A549 (cell line): ENCODE measurements at regions of chr16 and their contacts with region 1.

Region 1: DNA sequence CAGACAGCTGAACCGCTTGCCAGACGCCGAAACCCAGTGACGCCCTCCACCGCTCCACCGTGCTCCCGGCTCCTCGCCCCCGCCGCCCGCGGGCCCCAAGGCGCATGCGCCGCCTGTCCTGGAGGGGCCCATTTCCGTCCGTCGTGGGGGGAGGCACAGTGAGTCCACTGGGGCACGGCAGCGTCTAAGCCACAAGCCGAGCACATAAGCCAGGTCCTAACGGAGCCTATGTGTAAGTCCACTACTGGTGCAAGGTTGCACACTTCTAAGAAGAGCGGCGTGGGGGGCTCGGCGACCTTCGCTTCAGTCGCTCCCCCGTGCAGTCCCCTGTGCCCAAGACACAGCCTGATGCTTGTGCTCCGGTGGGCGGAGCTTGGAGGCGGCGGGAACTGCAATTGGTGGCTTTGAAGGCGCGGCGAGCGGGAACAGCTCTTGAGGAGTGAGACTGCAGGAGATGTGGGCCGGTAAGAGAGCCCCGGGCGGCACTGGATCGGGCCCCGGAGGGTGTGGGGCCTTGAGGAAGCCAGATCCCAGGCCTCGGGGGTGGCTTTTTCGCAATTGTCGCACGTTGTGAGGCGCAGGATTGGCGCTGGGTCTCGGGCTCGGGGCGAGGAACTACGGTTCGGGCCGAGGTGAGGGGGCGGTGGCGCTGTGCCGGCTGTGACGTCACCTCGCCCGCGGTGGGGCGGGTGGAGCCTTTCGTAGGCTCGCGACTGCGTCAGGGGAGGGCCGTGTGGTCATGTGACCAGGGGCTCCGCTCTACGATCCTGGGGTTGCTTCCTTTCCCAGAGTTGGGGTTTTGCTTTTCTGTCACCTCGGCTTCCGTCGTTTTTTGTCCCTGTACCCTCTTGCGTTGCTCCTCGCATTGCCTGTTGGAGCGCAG is at the starts of genes CENPN and CMC2:
- DNase-seq: peak; percentile 93 to 99
- ATAC-seq: peak; percentile 91 to 95
- H3K4me3 ChIP-seq: peak within 1 kb of the TSS; percentile 96
- H3K27ac ChIP-seq: peak within 1 kb of the TSS; percentile 94 to 95
- H3K4me1 ChIP-seq: peaks cover 19% of the 10 kb centered on the region
- CTCF ChIP-seq: no peak
- EP300 ChIP-seq: no peak
- POLR2A ChIP-seq: peak; percentile 63
- RAD21 ChIP-seq: no peak
- polyA plus RNA-seq, gene CENPN: 89.5 and 101 TPM in 2 replicates
- polyA plus RNA-seq, gene CMC2: 185 and 207 TPM in 2 replicates

Region 2: GRCh38 chr16:80554033-80554432 is 453.0 kb before region 1 on chr16:
- CTCF ChIA-PET with region 1: no interaction called
- POLR2A ChIA-PET with region 1: no interaction called
- DNase-seq: no peak
- ATAC-seq: no peak
- H3K4me3 ChIP-seq: no peak overlapping the region
- H3K27ac ChIP-seq: no peak overlapping the region
- H3K4me1 ChIP-seq: no peaks in the 10 kb centered on the region
- CTCF ChIP-seq: no peak
- EP300 ChIP-seq: no peak
- POLR2A ChIP-seq: no peak
- RAD21 ChIP-seq: no peak

Region 3: GRCh38 chr16:80986557-80986956 is 20.5 kb before region 1 on chr16:
- CTCF ChIA-PET with region 1: interaction called, 18 read pairs
- POLR2A ChIA-PET with region 1: no interaction called
- DNase-seq: no peak
- ATAC-seq: no peak
- H3K4me3 ChIP-seq: no peak overlapping the region
- H3K27ac ChIP-seq: peak overlapping the region in 1 of 2 experiments; percentile 16; a peak in 1 of 6 replicates
- H3K4me1 ChIP-seq: peaks cover 47% of the 10 kb centered on the region
- CTCF ChIP-seq: no peak
- EP300 ChIP-seq: no peak
- POLR2A ChIP-seq: no peak
- RAD21 ChIP-seq: no peak

Region 4: DNA sequence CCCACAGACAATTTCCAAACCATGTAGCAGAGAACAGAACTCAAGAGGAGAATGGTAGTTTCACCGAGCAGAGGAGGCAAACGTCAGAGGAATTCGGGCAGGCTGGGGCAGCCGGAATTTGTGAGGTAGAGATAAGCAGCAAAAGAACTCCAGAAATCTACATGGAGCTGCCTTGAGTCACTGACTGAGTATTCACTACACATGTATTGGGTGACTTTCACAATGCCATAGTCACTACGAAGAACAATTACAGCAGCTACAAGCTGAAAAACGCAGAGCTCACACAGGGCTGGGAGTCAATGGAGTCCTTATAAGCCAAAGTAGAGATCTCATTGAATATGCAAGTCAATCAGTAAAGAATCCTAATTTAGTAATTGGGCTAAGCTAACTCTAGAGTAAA is 13.7 kb before region 1 on chr16:
- CTCF ChIA-PET with region 1: interaction called, 19 read pairs
- POLR2A ChIA-PET with region 1: interaction called, 8 read pairs
- DNase-seq: peak in 1 of 2 experiments; percentile 70
- ATAC-seq: peak; percentile 89 to 92
- H3K4me3 ChIP-seq: peak overlapping the region; percentile 21; the same call in 1 of the 3 replicates
- H3K27ac ChIP-seq: peak overlapping the region; percentile 60 to 78
- H3K4me1 ChIP-seq: peaks cover 77% of the 10 kb centered on the region
- CTCF ChIP-seq: no peak
- EP300 ChIP-seq: no peak
- POLR2A ChIP-seq: no peak
- RAD21 ChIP-seq: no peak

Region 5: DNA sequence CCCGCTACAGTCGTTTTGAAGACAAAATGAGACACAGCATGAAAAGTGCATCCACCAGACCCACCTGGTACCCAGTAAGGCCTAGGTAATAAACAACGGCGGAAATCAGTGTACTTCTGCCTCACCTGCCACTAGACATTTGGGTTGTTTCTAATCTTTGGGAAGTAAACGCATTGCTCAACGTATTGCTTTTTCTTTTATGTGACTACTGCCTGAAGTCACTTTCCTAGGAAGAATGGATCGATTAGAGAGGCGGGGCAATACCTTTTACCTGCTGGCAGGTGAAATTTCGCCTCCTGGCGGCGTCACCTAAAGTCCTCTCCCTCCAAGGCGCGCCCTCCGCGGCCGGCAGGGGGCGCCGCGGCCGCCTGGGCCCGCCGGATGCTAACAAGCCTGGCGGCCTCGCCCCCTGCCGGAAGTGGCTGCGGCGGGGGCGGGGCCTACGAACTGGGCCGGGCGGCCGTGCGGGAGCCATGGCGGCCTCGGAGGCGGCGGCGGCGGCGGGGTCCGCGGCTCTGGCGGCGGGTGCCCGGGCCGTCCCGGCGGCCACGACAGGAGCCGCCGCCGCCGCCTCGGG is 28.4 kb after region 1 on chr16 and contains the start of gene ATMIN:
- CTCF ChIA-PET with region 1: interaction called, 33 read pairs
- POLR2A ChIA-PET with region 1: interaction called, 3 read pairs
- DNase-seq: peak; percentile 83 to 85
- ATAC-seq: peak; percentile 96
- H3K4me3 ChIP-seq: peak within 1 kb of the TSS; percentile 94
- H3K27ac ChIP-seq: peak within 1 kb of the TSS; percentile 86 to 96
- H3K4me1 ChIP-seq: peaks cover 9% of the 10 kb centered on the region; the same call in 1 of the 3 replicates
- CTCF ChIP-seq: peak; percentile 100
- EP300 ChIP-seq: no peak
- POLR2A ChIP-seq: peak; percentile 62
- RAD21 ChIP-seq: peak; percentile 52 to 82
- polyA plus RNA-seq, gene ATMIN: 50.4 and 56.4 TPM in 2 replicates

Region 6: DNA sequence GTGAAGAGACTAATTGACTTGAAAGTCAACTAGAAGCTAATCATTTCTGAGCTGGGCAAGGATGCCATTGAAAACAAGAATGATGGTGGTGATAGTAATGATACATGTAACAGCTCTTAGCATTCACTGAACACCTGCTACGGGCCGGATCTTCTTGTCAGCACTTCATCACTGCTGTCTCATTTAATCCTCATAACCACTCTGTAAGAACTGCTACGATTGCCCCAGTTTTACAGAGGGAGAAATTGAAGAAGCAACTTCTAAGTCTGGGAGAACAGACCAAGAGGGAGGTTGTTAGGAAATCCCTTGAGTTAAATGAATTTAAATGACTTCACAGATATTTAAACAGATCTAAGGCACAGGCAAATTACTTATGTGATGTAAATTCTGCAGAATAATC is 300.7 kb after region 1 on chr16:
- CTCF ChIA-PET with region 1: no interaction called
- POLR2A ChIA-PET with region 1: no interaction called
- DNase-seq: no peak
- ATAC-seq: no peak
- H3K4me3 ChIP-seq: no peak overlapping the region
- H3K27ac ChIP-seq: no peak overlapping the region
- H3K4me1 ChIP-seq: peaks cover 12% of the 10 kb centered on the region
- CTCF ChIP-seq: no peak
- EP300 ChIP-seq: no peak
- POLR2A ChIP-seq: no peak
- RAD21 ChIP-seq: no peak

Region 7: GRCh38 chr16:81737885-81738786 is 731.1 kb after region 1 on chr16:
- CTCF ChIA-PET with region 1: interaction called, 15 read pairs
- POLR2A ChIA-PET with region 1: no interaction called
- DNase-seq: peak; percentile 86 to 87
- ATAC-seq: peak; percentile 93 to 94
- H3K4me3 ChIP-seq: peak overlapping the region; percentile 32; the same call in 2 of the 3 replicates
- H3K27ac ChIP-seq: peak overlapping the region; percentile 65 to 78
- H3K4me1 ChIP-seq: peaks cover 13% of the 10 kb centered on the region
- CTCF ChIP-seq: peak; percentile 94
- EP300 ChIP-seq: no peak
- POLR2A ChIP-seq: no peak
- RAD21 ChIP-seq: peak; percentile 98